T-cell (primary cell): ENCODE measurements at regions of chr2 and their contacts with region 1.

Region 1: DNA sequence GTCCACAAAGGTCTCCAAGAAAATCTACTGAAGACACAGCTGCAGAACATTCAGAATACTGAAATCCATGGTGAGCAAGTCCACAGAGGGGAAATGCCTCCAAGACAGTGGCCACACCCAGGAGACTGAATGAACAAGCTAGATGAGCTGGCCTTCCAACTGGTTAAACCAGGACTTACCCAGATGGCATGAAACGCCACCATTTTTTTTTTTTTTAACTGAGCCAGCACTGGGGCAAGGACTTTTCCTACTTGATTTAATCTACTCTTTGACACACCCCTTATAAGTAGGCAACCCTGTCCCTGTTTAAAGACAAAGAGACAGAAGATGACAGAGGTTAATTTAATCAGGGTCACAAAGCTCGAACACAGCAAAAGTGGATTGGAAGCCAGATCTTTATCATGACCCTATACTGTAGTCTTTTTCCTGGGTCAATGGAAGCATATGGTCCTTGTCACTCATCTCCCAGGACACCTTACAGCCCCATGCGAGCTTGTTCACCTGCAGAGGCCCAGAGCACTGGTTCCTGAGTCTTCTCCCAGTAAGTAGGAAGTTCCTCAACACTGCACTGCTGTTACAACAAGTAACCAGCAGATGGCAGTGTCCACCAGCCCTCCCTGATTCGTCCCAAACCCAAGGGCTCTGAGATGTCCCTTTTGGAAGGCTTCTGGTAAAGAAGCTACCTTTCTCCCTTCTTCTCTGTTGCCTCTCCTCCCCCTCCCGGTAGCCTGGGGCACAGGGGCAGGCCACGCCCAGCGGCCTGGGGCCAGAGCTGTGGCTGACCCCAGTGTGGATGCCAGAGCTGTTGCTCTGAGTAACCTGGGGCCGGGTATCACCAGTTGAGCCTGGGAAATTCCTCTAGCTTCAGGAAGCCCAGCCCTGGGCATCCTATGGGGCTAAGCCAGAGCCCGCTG is 5.6 kb upstream of the GDF7 start:
- DNase-seq: peak in 34 of 35 experiments; percentile 20 to 85 (median 50)
- ATAC-seq: peak; percentile 65 to 79 (median 75)
- H3K4me3 ChIP-seq: no peak overlapping the region
- H3K4me3 Mint-ChIP-seq: no peak overlapping the region
- H3K27ac ChIP-seq: no peak overlapping the region
- H3K27ac Mint-ChIP-seq: no peak overlapping the region
- H3K4me1 ChIP-seq: peaks cover 0 to 17% of the 10 kb centered on the region in 2 experiments
- H3K4me1 Mint-ChIP-seq: peaks cover 6 to 12% (median 11%) of the 10 kb centered on the region in 3 donors
- H3K27me3 ChIP-seq: peaks cover 19 to 59% of the 10 kb centered on the region in 2 experiments
- H3K27me3 Mint-ChIP-seq: peaks cover 60 to 69% of the 10 kb centered on the region in 2 donors

Region 2: GRCh38 chr2:19272039-19272438 is 1389.3 kb before region 1 on chr2:
- CTCF ChIA-PET with region 1: interaction called in 1 of 2 experiments, 10 read pairs
- POLR2A ChIA-PET with region 1: no interaction called
- DNase-seq: no peak
- ATAC-seq: no peak
- H3K4me3 ChIP-seq: no peak overlapping the region
- H3K4me3 Mint-ChIP-seq: no peak overlapping the region
- H3K27ac ChIP-seq: no peak overlapping the region
- H3K27ac Mint-ChIP-seq: no peak overlapping the region
- H3K4me1 ChIP-seq: no peaks in the 10 kb centered on the region
- H3K4me1 Mint-ChIP-seq: no peaks in the 10 kb centered on the region
- H3K27me3 ChIP-seq: peaks cover 0 to 6% of the 10 kb centered on the region in 2 experiments
- H3K27me3 Mint-ChIP-seq: no peaks in the 10 kb centered on the region

Region 3: DNA sequence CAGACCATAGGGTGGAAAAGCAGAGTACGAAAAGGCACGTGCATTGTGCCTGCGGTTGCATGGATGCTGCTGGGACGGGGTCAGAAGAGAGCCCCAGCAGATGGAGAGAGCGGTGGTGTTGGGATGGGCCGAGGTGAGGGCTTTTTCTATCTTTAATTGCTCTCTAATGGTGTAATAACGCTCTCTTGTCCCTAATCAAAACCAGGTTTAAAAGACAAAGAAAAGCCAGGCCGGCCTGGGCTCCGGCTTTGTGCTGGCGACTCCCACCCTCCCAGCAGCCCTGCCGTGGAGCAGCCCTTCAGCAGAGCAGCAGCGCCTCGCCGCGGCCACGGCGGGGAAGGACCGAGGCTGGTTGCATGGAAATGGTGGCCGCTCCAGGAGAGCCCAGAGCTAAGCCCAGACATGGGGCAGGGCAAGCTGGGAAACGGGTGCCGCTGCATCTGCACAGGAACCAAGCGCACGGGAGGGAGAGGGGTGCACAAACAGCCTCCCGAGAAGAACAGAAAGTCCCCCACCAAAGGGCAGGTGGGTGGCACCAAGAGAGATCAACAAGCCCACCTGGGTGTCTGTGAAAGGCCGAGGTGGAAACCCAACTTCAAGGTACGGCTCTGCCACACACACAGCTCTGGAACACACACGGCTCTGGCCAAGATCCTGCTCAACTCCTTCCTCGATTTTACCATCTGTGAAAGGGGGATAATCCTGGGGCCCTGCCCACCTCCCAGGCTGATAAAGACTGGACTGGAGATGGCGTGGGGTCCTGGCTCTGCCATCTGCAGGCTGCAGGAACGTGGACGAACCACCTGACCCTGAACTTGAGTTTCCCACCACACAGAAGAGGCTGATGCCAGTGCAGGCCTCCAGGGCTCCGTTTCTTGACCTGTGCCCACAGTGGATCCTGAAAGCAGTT is 25.4 kb before region 1 on chr2:
- CTCF ChIA-PET with region 1: no interaction called
- POLR2A ChIA-PET with region 1: no interaction called
- DNase-seq: peak in 24 of 35 experiments; percentile 6 to 51 (median 26)
- ATAC-seq: peak in 3 of 4 experiments; percentile 27 to 79 (median 46)
- H3K4me3 ChIP-seq: no peak overlapping the region
- H3K4me3 Mint-ChIP-seq: no peak overlapping the region
- H3K27ac ChIP-seq: no peak overlapping the region
- H3K27ac Mint-ChIP-seq: no peak overlapping the region
- H3K4me1 ChIP-seq: no peaks in the 10 kb centered on the region
- H3K4me1 Mint-ChIP-seq: no peaks in the 10 kb centered on the region
- H3K27me3 ChIP-seq: no peaks in the 10 kb centered on the region
- H3K27me3 Mint-ChIP-seq: no peaks in the 10 kb centered on the region

Region 4: DNA sequence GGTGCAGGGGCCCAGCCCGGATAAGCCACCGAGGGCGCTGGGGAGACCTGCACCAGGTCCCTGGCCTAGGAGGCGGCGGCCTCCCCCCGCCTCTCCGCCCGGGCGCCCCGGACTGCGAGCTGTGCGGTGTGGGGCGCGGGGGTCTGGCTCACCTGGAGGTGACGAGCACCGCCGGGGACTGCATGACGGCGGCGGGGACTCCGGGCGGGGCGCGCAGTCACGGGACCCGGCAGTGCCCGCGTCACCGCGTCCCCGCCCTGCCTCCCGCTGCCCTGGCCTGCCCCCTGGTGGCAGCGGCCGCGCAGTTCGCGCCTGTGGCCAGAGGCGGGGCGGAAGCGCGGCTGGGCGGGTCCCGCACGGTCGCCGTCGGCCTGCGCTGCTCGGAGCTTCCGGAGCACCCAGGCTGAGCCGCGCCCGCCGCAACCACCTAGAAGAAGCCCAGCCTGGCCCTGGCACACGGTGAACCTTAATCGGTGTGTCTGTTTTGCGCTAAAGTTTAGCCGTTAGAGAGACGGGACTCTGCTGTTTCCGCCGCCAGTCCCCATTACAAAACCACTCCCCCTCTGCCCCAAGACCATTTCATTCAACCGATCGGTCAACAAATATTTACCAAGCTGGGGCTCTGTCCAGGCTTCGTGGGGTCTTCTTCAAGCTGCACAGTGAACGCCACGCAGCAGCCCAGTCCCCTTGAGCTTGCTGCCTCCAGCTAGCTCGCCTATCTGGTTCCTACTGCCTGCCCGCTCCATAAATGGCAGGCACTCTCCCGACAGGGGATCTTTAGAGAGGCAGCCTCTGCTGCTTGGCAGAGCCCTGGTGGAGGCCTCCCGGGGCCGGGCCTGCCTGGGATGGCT is 10.2 kb before region 1 on chr2 and contains the start of gene HS1BP3:
- CTCF ChIA-PET with region 1: interaction called, 19 to 31 read pairs
- POLR2A ChIA-PET with region 1: interaction called in 1 of 2 experiments, 3 read pairs
- DNase-seq: peak; percentile 73 to 97 (median 85)
- ATAC-seq: peak; percentile 92 to 98 (median 96)
- H3K4me3 ChIP-seq: peak within 1 kb of the TSS; percentile 71 to 81
- H3K4me3 Mint-ChIP-seq: peak within 1 kb of the TSS; percentile 83 to 91 (median 87)
- H3K27ac ChIP-seq: peak within 1 kb of the TSS; percentile 93
- H3K27ac Mint-ChIP-seq: peak within 1 kb of the TSS; percentile 94 to 96
- H3K4me1 ChIP-seq: peaks cover 4 to 30% of the 10 kb centered on the region in 2 experiments
- H3K4me1 Mint-ChIP-seq: peaks cover 32 to 42% (median 36%) of the 10 kb centered on the region in 3 donors
- H3K27me3 ChIP-seq: no peaks in the 10 kb centered on the region
- H3K27me3 Mint-ChIP-seq: peaks cover 0 to 4% of the 10 kb centered on the region in 2 donors
- total RNA-seq, gene HS1BP3: 11.1 to 20.7 (median 17.2) TPM

Region 5: DNA sequence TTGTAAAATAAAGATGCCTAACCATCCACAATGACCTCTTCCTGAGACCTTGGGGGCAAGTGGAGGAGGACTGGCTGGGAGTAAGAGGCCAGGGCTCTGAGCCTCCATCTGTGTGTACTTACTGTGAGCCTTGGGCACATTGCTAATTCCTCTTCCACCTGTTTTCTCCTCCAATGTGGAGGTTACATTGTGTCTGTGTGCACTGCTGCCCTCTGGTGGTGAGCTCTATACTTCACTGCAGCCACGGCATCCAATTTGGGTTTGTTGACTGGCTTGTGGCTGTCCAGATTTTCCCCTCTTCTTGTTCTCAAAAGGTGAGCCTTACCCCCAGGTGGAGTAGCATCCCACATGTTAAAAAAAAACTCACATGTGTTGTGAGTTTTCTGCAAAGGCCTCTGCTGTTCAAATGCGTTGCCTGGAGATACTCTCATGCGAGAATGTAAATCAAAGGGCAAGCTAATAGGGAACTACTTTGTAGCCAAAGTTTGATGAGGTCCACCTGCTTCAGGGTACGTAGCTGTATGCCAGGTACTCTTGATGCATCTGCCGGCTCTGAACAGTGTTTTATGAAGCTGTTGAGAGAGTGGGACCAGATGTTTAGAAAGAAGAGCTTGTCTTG is 301.7 kb after region 1 on chr2:
- CTCF ChIA-PET with region 1: interaction called, 59 to 63 read pairs
- POLR2A ChIA-PET with region 1: interaction called in 1 of 2 experiments, 5 read pairs
- DNase-seq: peak; percentile 5 to 78 (median 52)
- ATAC-seq: peak; percentile 36 to 67 (median 52)
- H3K4me3 ChIP-seq: no peak overlapping the region
- H3K4me3 Mint-ChIP-seq: no peak overlapping the region
- H3K27ac ChIP-seq: no peak overlapping the region
- H3K27ac Mint-ChIP-seq: no peak overlapping the region
- H3K4me1 ChIP-seq: no peaks in the 10 kb centered on the region
- H3K4me1 Mint-ChIP-seq: no peaks in the 10 kb centered on the region
- H3K27me3 ChIP-seq: peaks cover 0 to 15% of the 10 kb centered on the region in 2 experiments
- H3K27me3 Mint-ChIP-seq: peaks cover 24 to 28% of the 10 kb centered on the region in 2 donors